Left ventricle myocardium inferior (tissue), 1 donor: ENCODE measurements at regions of chr9 and their contacts with region 1.

Region 1: GRCh38 chr9:23123048-23123632 is 676.5 kb downstream of the DMRTA1 start:
- DNase-seq: no peak
- H3K4me3 ChIP-seq: no peak overlapping the region
- H3K27ac ChIP-seq: no peak overlapping the region
- H3K4me1 ChIP-seq: no peaks in the 10 kb centered on the region
- H3K27me3 ChIP-seq: no peaks in the 10 kb centered on the region
- CTCF ChIP-seq: peak; percentile 63

Region 2: GRCh38 chr9:23492126-23493002 is 369.2 kb after region 1 on chr9:
- intact Hi-C with region 1: loop called (anchors 10 kb)
- DNase-seq: no peak
- H3K4me3 ChIP-seq: no peak overlapping the region
- H3K27ac ChIP-seq: no peak overlapping the region
- H3K4me1 ChIP-seq: peaks cover 3% of the 10 kb centered on the region
- H3K27me3 ChIP-seq: no peaks in the 10 kb centered on the region
- CTCF ChIP-seq: peak; percentile 59